ENCODE measurements at regions of chr4 and their contacts with region 1.

Region 1: DNA sequence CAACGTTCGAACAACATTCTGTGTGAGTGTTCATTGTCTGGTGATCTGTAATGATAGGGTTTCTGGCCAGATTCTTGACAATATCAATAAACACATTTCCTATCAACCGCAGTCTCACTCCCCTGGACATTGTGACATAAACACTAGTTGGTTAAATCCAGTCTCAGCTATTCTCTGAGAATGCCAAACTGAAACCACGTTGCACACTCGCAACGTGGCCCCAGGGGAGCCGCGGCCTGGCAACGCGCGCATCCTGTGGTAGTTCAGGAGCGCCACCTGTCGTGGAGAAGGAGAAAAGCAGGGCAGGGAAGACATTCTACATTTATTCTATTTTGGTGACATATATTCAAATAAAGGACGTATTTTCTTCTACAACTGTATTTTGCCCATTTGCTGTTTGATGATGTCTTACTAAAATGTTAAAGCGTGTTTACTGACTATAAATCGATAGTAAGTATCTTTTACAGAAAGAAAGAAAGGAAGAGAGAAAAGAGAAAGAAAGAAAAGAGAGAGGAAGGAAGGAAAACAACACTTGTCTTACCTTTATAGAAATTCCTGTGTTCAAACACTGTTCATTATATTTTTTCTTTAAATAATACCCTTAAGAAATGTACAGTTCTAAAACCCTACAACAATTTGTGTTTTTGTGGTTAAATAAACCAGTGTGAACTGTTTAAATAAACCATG is 738.3 kb upstream of the FRG1 start:
- DNase-seq: peak in 1 of 2 experiments; percentile 11
- H3K4me3 ChIP-seq: peak overlapping the region; percentile 50
- H3K27ac ChIP-seq: no peak overlapping the region
- H3K4me1 ChIP-seq: no peaks in the 10 kb centered on the region
- H3K27me3 ChIP-seq: no peaks in the 10 kb centered on the region
- CTCF ChIP-seq: peak; percentile 81

Region 2: DNA sequence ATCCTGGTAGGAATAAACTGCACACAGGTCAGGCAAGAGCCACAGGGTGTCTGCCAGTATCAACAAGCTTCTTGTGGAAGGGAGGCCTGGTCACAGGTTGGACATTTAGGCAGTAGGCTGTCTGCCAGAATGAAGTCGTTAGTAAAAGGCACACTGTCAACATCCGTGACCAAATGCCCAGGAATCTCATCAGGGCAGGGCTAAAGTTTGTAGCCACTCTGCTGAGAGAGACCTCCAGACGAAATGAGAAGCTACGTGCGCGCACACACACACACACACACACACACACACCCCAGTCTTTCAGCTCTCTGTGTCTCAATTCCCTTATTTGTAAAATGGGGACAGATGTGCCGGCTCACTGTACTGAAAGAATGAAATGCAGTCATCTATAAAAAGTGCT is 1615.4 kb before region 1 on chr4:
- CTCF ChIA-PET with region 1: no interaction called
- POLR2A ChIA-PET with region 1: interaction called, 12 read pairs
- intact Hi-C with region 1: no loop called
- DNase-seq: no peak
- H3K4me3 ChIP-seq: no peak overlapping the region
- H3K27ac ChIP-seq: no peak overlapping the region
- H3K4me1 ChIP-seq: no peaks in the 10 kb centered on the region
- H3K27me3 ChIP-seq: no peaks in the 10 kb centered on the region
- CTCF ChIP-seq: no peak

Measured in PC-9 (cell line).